PC-3 (cell line): ENCODE measurements at regions of chr17 and their contacts with region 1.

Region 1: GRCh38 chr17:77916703-77917481 is 41.6 kb upstream of the TNRC6C start:
- DNase-seq: no peak
- ATAC-seq: no peak; the same call in 1 of the 2 replicates
- H3K4me3 ChIP-seq: no peak overlapping the region
- H3K27ac ChIP-seq: no peak overlapping the region
- H3K4me1 ChIP-seq: no peaks in the 10 kb centered on the region
- H3K27me3 ChIP-seq: peaks cover 66% of the 10 kb centered on the region
- CTCF ChIP-seq: no peak

Region 2: GRCh38 chr17:77019955-77020379 is 896.9 kb before region 1 on chr17:
- CTCF ChIA-PET with region 1: no interaction called
- POLR2A ChIA-PET with region 1: interaction called, 29 read pairs
- intact Hi-C with region 1: no loop called
- DNase-seq: no peak
- ATAC-seq: no peak
- H3K4me3 ChIP-seq: no peak overlapping the region
- H3K27ac ChIP-seq: no peak overlapping the region
- H3K4me1 ChIP-seq: no peaks in the 10 kb centered on the region
- H3K27me3 ChIP-seq: peaks cover 12% of the 10 kb centered on the region; the same call in 1 of the 2 replicates
- CTCF ChIP-seq: no peak

Region 3: DNA sequence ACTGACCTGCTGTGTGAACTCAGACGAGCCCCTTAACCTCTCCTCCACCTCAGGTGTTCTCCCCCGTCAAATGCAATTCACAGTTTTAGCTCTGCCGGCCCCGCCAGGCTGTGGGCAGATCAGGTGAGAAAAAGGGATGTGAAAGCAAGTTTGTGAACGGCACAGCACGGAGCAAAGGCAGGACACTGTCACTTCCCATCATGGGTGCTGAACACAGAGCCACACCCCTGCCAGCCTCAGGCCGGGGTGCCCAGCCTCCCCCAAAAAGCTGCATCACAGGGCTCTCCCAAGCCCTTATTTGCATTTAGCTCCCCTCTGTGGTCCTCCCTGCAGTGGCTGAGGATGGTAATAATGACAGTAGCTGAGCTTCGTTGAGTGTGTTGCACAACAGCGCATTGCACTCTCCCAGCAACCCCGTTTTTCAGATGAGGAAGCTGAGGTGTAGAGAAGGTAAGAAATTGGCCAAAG is 47.2 kb before region 1 on chr17:
- CTCF ChIA-PET with region 1: no interaction called
- POLR2A ChIA-PET with region 1: no interaction called
- intact Hi-C with region 1: no loop called
- DNase-seq: no peak
- ATAC-seq: no peak
- H3K4me3 ChIP-seq: no peak overlapping the region
- H3K27ac ChIP-seq: no peak overlapping the region
- H3K4me1 ChIP-seq: no peaks in the 10 kb centered on the region
- H3K27me3 ChIP-seq: peaks cover 65% of the 10 kb centered on the region
- CTCF ChIP-seq: no peak